ENCODE measurements at regions of chr4 and their contacts with region 1.

Region 1: GRCh38 chr4:99651816-99652485 is 5.7 kb downstream of the C4orf54 start:
- DNase-seq: no peak
- H3K4me3 ChIP-seq: no peak overlapping the region
- H3K27ac ChIP-seq: no peak overlapping the region
- H3K4me1 ChIP-seq: no peaks in the 10 kb centered on the region
- H3K27me3 ChIP-seq: no peaks in the 10 kb centered on the region
- CTCF ChIP-seq: no peak
- POLR2A ChIP-seq: no peak

Region 2: GRCh38 chr4:99665983-99666382 is 14.0 kb after region 1 on chr4:
- intact Hi-C with region 1: loop called (anchors 1 kb)
- DNase-seq: no peak
- H3K4me3 ChIP-seq: no peak overlapping the region
- H3K27ac ChIP-seq: no peak overlapping the region
- H3K4me1 ChIP-seq: no peaks in the 10 kb centered on the region
- H3K27me3 ChIP-seq: no peaks in the 10 kb centered on the region
- CTCF ChIP-seq: no peak
- POLR2A ChIP-seq: no peak

Region 3: GRCh38 chr4:99677161-99677560 is 25.2 kb after region 1 on chr4:
- intact Hi-C with region 1: no loop called
- DNase-seq: no peak
- H3K4me3 ChIP-seq: no peak overlapping the region
- H3K27ac ChIP-seq: no peak overlapping the region
- H3K4me1 ChIP-seq: no peaks in the 10 kb centered on the region
- H3K27me3 ChIP-seq: no peaks in the 10 kb centered on the region
- CTCF ChIP-seq: no peak
- POLR2A ChIP-seq: no peak